ENCODE measurements at regions of chr10 and their contacts with region 1.

Region 1: GRCh38 chr10:104580774-104581675 is 60.1 kb upstream of the SORCS3 start:
- DNase-seq: peak; percentile 79
- H3K4me3 ChIP-seq: no peak overlapping the region
- H3K27ac ChIP-seq: peak overlapping the region in 1 of 2 experiments; percentile 63; a peak in 1 of 4 replicates
- H3K4me1 ChIP-seq: no peaks in the 10 kb centered on the region; a peak in 1 of 4 replicates
- H3K27me3 ChIP-seq: no peaks in the 10 kb centered on the region
- CTCF ChIP-seq: peak; percentile 89
- EP300 ChIP-seq: no peak
- RAD21 ChIP-seq: peak; percentile 83

Region 2: GRCh38 chr10:104472493-104472892 is 108.5 kb before region 1 on chr10:
- CTCF ChIA-PET with region 1: no interaction called
- POLR2A ChIA-PET with region 1: no interaction called
- DNase-seq: no peak
- H3K4me3 ChIP-seq: no peak overlapping the region
- H3K27ac ChIP-seq: no peak overlapping the region; a peak in 1 of 4 replicates
- H3K4me1 ChIP-seq: no peaks in the 10 kb centered on the region
- H3K27me3 ChIP-seq: no peaks in the 10 kb centered on the region
- CTCF ChIP-seq: no peak
- EP300 ChIP-seq: no peak
- RAD21 ChIP-seq: no peak

Region 3: GRCh38 chr10:104548090-104548489 is 32.9 kb before region 1 on chr10:
- CTCF ChIA-PET with region 1: interaction called, 11 read pairs
- POLR2A ChIA-PET with region 1: no interaction called
- DNase-seq: no peak
- H3K4me3 ChIP-seq: no peak overlapping the region
- H3K27ac ChIP-seq: no peak overlapping the region
- H3K4me1 ChIP-seq: no peaks in the 10 kb centered on the region
- H3K27me3 ChIP-seq: no peaks in the 10 kb centered on the region
- CTCF ChIP-seq: no peak
- EP300 ChIP-seq: no peak
- RAD21 ChIP-seq: no peak

Region 4: DNA sequence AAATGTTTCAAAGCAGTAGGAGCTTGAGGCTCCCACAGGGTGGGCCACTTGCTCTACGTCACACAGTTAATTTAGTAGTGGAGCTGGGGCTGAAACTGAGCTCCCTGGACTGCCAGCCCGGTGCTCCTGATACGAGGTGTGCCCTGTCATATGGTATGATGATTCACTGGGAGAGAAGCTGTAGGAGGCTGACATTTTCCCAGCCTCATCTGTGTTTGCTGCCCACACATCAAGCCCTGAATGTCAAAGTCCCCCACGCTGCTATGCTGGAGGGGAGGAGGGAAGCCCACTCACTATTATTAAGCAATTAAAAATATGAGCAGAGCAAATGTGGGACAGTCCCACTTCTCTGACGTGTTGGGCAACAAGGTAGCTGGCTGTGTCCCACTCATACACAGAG is 21.1 kb before region 1 on chr10:
- CTCF ChIA-PET with region 1: interaction called, 16 read pairs
- POLR2A ChIA-PET with region 1: no interaction called
- DNase-seq: no peak
- H3K4me3 ChIP-seq: no peak overlapping the region
- H3K27ac ChIP-seq: no peak overlapping the region
- H3K4me1 ChIP-seq: no peaks in the 10 kb centered on the region
- H3K27me3 ChIP-seq: no peaks in the 10 kb centered on the region
- CTCF ChIP-seq: no peak
- EP300 ChIP-seq: no peak
- RAD21 ChIP-seq: no peak

Region 5: GRCh38 chr10:104608091-104608828 is 27.2 kb after region 1 on chr10:
- CTCF ChIA-PET with region 1: interaction called, 17 read pairs
- POLR2A ChIA-PET with region 1: no interaction called
- DNase-seq: no peak
- H3K4me3 ChIP-seq: no peak overlapping the region
- H3K27ac ChIP-seq: no peak overlapping the region
- H3K4me1 ChIP-seq: no peaks in the 10 kb centered on the region; a peak in 1 of 4 replicates
- H3K27me3 ChIP-seq: no peaks in the 10 kb centered on the region
- CTCF ChIP-seq: no peak
- EP300 ChIP-seq: no peak
- RAD21 ChIP-seq: no peak

Region 6: GRCh38 chr10:104614245-104614831 is 33.3 kb after region 1 on chr10:
- CTCF ChIA-PET with region 1: interaction called, 17 read pairs
- POLR2A ChIA-PET with region 1: no interaction called
- DNase-seq: peak; percentile 52
- H3K4me3 ChIP-seq: no peak overlapping the region
- H3K27ac ChIP-seq: no peak overlapping the region
- H3K4me1 ChIP-seq: no peaks in the 10 kb centered on the region; a peak in 1 of 4 replicates
- H3K27me3 ChIP-seq: no peaks in the 10 kb centered on the region; the same call in 1 of the 2 replicates
- CTCF ChIP-seq: peak; percentile 75
- EP300 ChIP-seq: no peak
- RAD21 ChIP-seq: peak; percentile 72

Region 7: DNA sequence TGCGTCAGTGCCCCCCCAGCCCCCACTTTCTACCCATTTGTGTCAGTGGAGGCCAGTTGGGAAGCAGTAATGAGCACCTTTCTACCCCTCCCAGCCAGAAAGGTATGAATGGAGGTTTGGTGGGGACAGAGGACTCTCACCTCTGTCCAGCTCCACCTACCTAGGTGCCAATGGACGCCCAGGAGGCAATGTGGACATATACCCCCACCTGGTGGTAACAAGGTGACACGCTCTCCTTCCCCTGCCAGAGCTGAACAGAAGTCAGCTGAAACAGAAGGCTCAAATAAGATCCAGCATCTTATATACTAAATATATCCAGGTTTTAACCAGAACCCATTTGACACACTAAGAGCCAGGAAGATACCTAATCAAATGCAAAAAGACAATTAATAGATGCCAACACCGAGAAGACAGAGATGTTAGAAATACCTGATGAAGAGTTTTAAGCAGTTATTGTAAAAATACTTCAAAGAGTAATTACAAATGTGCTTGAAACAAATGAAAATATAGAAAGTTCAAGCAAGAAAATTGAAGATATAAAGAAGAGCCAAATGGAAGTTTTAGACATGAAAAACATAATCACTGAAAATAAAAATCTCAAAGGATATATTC is 41.7 kb after region 1 on chr10:
- CTCF ChIA-PET with region 1: interaction called, 35 read pairs
- POLR2A ChIA-PET with region 1: no interaction called
- DNase-seq: peak; percentile 62
- H3K4me3 ChIP-seq: no peak overlapping the region
- H3K27ac ChIP-seq: no peak overlapping the region
- H3K4me1 ChIP-seq: no peaks in the 10 kb centered on the region
- H3K27me3 ChIP-seq: no peaks in the 10 kb centered on the region; the same call in 1 of the 2 replicates
- CTCF ChIP-seq: peak; percentile 58
- EP300 ChIP-seq: no peak
- RAD21 ChIP-seq: peak; percentile 82

Measured in SK-N-SH (cell line).